GM12878 (cell line): ENCODE measurements at regions of chr1 and their contacts with region 1.

Region 1: GRCh38 chr1:15949453-15950245 is 26.3 kb downstream of the ZBTB17 start:
- DNase-seq: peak; percentile 71
- ATAC-seq: peak; percentile 92
- H3K4me3 ChIP-seq: peak overlapping the region; percentile 34; the same call in 1 of the 2 replicates
- H3K27ac ChIP-seq: peak overlapping the region; percentile 79
- H3K4me1 ChIP-seq: peaks cover 40% of the 10 kb centered on the region
- H3K27me3 ChIP-seq: no peaks in the 10 kb centered on the region
- CTCF ChIP-seq: no peak
- EP300 ChIP-seq: no peak
- POLR2A ChIP-seq: peak; percentile 70; the same call in 1 of the 2 replicates
- RAD21 ChIP-seq: no peak

Region 2: DNA sequence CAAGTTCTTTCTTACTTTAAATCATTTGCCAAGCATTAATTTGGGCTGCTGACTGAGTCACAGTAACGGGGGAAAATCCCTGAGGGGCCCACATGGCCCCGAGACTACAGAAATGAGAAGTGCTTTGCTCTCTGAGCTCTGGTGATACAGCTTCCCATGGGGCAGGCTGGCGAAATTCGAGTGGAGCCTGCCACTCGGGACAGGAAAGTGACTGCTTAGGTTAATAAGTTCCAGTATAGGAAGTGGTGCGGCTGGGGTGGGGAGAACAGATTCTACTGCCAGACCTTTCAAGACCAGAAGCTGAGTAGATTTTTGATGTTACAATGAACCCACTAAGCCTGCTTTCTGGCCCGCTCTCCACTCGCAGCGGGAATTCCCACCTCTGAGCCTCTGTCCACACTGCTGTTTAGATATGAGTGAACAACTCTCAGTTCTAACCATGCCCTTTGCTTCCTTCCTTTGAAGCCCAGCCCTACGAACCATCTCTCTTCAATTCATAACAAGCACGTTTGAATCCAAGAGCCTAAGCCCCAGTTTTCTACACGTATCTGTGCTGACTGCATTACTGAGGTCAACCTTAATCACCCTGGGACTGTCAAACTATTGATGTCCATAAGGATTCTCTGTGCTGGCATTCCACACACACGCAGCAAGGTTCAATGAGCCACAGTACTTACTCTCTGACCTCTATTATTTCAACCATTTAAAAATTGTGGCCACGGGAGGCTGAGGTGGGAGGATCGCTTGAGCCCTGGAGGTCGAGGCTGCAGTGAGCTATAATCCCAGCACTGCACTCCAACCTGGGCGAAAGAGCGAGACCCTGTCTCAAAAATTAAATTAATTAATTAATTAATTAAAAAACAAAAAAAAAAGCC is 16.7 kb after region 1 on chr1:
- CTCF ChIA-PET with region 1: interaction called, 10 read pairs
- POLR2A ChIA-PET with region 1: interaction called, 47 read pairs
- RAD21 ChIA-PET with region 1: interaction called, 34 read pairs
- SMC1A ChIA-PET with region 1: interaction called, 78 read pairs
- in situ Hi-C with region 1: no loop called
- intact Hi-C with region 1: loop called (anchors 1 kb)
- DNase-seq: peak; percentile 94
- ATAC-seq: peak; percentile 80
- H3K4me3 ChIP-seq: peak overlapping the region; percentile 43; the same call in 1 of the 2 replicates
- H3K27ac ChIP-seq: peak overlapping the region; percentile 87
- H3K4me1 ChIP-seq: peaks cover 55% of the 10 kb centered on the region
- H3K27me3 ChIP-seq: no peaks in the 10 kb centered on the region
- CTCF ChIP-seq: no peak
- EP300 ChIP-seq: peak; percentile 85 to 93
- POLR2A ChIP-seq: no peak
- RAD21 ChIP-seq: no peak; the same call in 1 of the 2 replicates

Region 3: DNA sequence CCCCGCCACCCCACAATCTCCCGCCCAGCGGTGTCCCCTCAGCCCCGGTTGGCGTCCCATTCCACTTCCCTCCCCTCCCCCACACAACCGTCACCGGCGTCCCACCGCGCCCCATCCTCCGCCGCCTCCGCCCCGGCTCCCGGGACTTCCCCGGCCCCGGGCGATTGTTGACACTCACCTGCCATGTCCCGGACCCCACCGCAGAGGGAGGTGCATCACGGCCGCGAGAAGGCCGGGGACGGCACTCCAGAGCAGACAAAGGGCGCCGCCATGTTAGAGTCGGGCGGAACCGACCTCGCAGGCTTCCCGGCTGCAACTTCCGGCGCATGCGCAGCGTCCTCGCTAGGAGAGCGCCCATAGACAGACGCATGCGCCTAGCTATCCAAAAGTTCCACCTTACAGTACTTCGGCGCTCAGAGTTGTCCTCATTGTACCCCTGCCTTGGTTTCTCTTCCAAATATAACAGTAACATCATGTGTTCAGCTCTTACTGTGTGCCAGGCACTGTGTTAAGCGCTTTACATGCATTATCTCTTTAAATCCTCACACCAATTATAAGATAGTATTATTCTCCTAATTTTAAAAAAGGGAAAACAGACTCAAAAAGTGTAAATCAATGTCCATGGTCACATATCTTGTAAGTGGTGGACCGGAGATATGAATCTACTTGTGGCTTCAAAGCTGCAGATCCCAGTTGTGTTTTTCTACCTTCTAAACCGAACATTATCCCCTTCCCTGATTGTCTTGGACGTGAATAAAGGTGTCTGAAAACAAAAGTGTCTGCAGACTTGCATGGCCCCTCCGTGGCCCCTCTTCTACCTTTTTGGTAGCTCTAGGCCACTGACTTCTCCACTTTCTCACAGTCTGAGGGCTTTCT is 26.4 kb after region 1 on chr1 and contains the start of gene ZBTB17:
- CTCF ChIA-PET with region 1: interaction called, 25 read pairs
- POLR2A ChIA-PET with region 1: interaction called, 13 read pairs
- RAD21 ChIA-PET with region 1: interaction called, 29 read pairs
- SMC1A ChIA-PET with region 1: interaction called, 12 read pairs
- in situ Hi-C with region 1: no loop called
- intact Hi-C with region 1: loop called (anchors 1 kb)
- DNase-seq: peak; percentile 79
- ATAC-seq: peak; percentile 82
- H3K4me3 ChIP-seq: peak within 1 kb of the TSS; percentile 95
- H3K27ac ChIP-seq: peak within 1 kb of the TSS; percentile 80
- H3K4me1 ChIP-seq: peaks cover 4% of the 10 kb centered on the region
- H3K27me3 ChIP-seq: no peaks in the 10 kb centered on the region
- CTCF ChIP-seq: no peak
- EP300 ChIP-seq: no peak
- POLR2A ChIP-seq: peak; percentile 78
- RAD21 ChIP-seq: no peak
- polyA plus RNA-seq, gene ZBTB17: 0.87 to 4.3 TPM

Region 4: DNA sequence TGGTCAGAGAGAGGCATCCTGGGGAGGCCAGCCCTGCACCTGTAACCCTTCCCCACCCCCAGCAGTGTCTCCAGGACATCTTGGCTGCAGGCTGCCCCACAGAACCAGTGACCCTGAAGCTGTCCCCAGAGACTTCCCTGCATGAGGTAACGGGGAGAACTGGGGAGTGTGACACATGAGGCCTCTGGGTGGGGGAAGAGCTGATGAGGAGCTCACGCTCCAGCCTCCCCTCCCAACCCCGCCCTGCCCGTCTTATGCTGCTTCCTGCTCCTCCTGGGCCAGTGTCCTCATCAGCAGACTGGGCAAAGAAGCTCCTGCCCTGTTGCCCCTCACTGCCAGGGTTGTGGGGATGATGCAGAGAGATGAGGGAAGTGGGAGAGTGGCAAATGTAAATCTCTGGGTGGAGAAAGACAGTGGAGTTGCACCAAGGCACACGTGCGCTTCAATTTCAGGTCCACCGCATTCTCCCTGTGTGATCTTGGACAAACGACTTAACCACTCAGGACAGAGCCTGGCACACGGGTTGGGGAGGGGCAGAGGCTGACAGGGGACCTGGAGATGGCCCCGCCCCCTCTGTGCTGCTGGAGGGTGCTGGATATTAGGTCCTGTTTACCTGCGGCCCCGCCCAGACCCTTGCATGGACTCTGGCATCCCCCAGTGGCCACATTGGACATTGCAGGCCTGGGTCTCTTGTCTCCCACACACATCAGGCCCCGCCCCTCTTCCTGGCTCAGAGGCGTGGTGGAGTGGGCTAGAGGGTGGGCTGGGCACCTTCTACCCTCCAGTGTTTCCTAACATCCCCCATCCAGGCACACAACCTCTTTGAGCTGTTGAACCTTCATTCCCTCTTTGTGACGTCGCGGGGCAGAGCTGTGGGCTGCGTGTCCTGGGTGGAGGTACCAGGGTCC is 106.2 kb after region 1 on chr1:
- CTCF ChIA-PET with region 1: no interaction called
- POLR2A ChIA-PET with region 1: no interaction called
- RAD21 ChIA-PET with region 1: no interaction called
- SMC1A ChIA-PET with region 1: no interaction called
- in situ Hi-C with region 1: no loop called
- intact Hi-C with region 1: loop called (anchors 10 kb)
- DNase-seq: peak; percentile 33
- ATAC-seq: peak; percentile 97
- H3K4me3 ChIP-seq: no peak overlapping the region
- H3K27ac ChIP-seq: no peak overlapping the region
- H3K4me1 ChIP-seq: no peaks in the 10 kb centered on the region
- H3K27me3 ChIP-seq: no peaks in the 10 kb centered on the region
- CTCF ChIP-seq: peak; percentile 97 to 100 (median 98)
- EP300 ChIP-seq: no peak
- POLR2A ChIP-seq: no peak
- RAD21 ChIP-seq: peak; percentile 96